GM12878 (cell line): ENCODE measurements at regions of chr2 and their contacts with region 1.

Region 1: DNA sequence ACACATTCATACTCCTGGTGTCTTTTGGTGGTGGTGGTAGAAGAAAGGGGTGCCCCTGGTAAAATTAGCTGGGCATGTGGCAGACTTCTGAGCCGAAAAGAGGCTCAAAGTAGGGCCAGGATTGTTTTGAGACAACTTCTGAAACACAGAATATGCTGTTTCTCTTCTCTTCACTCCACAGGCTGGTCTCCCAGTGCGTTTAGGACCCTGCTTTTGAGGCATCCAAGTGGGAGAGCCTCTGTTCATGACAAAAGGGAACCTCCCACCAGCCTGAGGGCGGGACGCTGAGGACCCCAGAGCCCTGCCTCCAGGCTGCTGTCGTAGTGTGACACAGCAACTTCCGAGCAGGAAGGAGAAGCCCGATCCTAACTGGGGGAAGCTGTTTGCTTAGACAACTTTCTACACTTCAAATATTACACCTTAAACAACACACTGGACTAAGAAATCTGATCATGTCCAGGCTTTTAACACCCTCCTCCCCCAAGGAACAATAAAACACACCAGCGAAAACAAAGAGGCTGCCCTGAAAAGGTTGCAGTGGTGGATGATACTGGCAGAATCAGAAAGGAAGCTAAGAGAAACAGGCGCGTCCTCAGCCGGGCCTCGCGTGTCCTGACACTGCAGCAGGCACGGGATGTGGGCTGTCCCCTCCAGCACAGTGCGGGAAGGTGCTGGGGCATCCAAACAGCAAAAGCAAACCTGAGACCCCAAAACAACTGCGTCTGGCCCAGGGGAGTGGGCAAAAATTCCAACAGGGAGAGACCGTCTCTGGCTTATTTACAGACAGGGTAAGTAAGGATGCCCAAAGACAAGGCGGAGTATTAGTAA is 9.3 kb downstream of the SERTAD2 start:
- DNase-seq: no peak
- ATAC-seq: peak; percentile 76
- H3K4me3 ChIP-seq: peak overlapping the region; percentile 87
- H3K27ac ChIP-seq: peak overlapping the region; percentile 95
- H3K4me1 ChIP-seq: peaks cover 46% of the 10 kb centered on the region
- H3K27me3 ChIP-seq: no peaks in the 10 kb centered on the region
- CTCF ChIP-seq: no peak
- EP300 ChIP-seq: no peak; a peak in 1 of 4 replicates
- POLR2A ChIP-seq: peak; percentile 74
- RAD21 ChIP-seq: no peak

Region 2: DNA sequence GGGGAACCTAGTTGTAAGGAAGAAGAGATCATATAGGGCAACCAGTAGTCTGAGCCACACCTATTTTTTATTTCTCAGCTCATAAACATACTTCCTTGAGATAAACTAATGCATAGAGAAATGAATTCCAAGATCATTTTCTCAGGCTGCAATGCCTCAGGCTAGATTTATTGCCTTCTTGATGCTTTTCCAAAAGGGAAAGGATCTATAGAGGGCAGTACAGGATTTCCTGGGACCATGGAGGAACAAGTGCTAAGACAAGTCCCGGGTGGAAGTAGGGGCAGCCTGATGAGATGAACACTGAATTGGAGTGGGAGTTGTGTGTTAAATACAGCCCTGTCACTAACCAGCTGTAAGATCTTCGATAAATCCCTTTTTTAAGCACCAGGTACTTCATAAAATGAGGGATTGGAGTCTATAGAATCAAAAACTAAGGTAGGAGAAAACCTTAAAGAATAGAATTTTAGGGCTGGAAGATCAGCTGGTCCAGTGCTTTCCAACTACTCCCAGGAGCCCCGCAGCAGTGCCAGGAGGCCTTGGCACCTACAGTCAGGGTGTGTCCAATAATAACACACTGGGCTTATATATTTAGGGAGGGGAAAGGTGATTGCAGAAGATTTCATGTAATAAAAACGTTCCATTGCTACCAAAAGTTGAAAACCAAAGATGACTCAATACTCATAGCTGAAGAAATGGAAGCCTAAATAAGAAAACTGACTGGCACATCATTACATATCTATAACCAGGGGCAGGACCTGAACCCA is 48.8 kb before region 1 on chr2:
- CTCF ChIA-PET with region 1: interaction called, 3 read pairs
- POLR2A ChIA-PET with region 1: interaction called, 3 read pairs
- RAD21 ChIA-PET with region 1: interaction called, 9 read pairs
- SMC1A ChIA-PET with region 1: interaction called, 13 read pairs
- in situ Hi-C with region 1: no loop called
- intact Hi-C with region 1: no loop called
- DNase-seq: no peak
- ATAC-seq: no peak
- H3K4me3 ChIP-seq: no peak overlapping the region
- H3K27ac ChIP-seq: no peak overlapping the region
- H3K4me1 ChIP-seq: peaks cover 6% of the 10 kb centered on the region; the same call in 1 of the 2 replicates
- H3K27me3 ChIP-seq: no peaks in the 10 kb centered on the region
- CTCF ChIP-seq: peak in 1 of 3 experiments; percentile 34; a peak in 2 of 6 replicates
- EP300 ChIP-seq: no peak
- POLR2A ChIP-seq: no peak
- RAD21 ChIP-seq: no peak; the same call in 1 of the 2 replicates

Region 3: GRCh38 chr2:64698668-64699444 is 54.5 kb after region 1 on chr2:
- CTCF ChIA-PET with region 1: interaction called, 13 read pairs
- POLR2A ChIA-PET with region 1: interaction called, 81 read pairs
- RAD21 ChIA-PET with region 1: interaction called, 55 read pairs
- SMC1A ChIA-PET with region 1: interaction called, 262 read pairs
- in situ Hi-C with region 1: no loop called
- intact Hi-C with region 1: loop called (anchors 2 kb)
- DNase-seq: peak; percentile 83
- ATAC-seq: peak; percentile 90
- H3K4me3 ChIP-seq: no peak overlapping the region; the same call in 1 of the 2 replicates
- H3K27ac ChIP-seq: peak overlapping the region; percentile 98
- H3K4me1 ChIP-seq: peaks cover 53% of the 10 kb centered on the region
- H3K27me3 ChIP-seq: no peaks in the 10 kb centered on the region
- CTCF ChIP-seq: no peak
- EP300 ChIP-seq: peak; percentile 41 to 84; a peak in 2 of 4 replicates
- POLR2A ChIP-seq: no peak
- RAD21 ChIP-seq: no peak

Region 4: GRCh38 chr2:64737547-64737946 is 93.2 kb after region 1 on chr2:
- CTCF ChIA-PET with region 1: interaction called, 153 read pairs
- POLR2A ChIA-PET with region 1: interaction called, 32 read pairs
- RAD21 ChIA-PET with region 1: interaction called, 514 read pairs
- SMC1A ChIA-PET with region 1: interaction called, 945 read pairs
- in situ Hi-C with region 1: no loop called
- intact Hi-C with region 1: no loop called
- DNase-seq: peak; percentile 61
- ATAC-seq: peak; percentile 77
- H3K4me3 ChIP-seq: peak overlapping the region; percentile 2; the same call in 1 of the 2 replicates
- H3K27ac ChIP-seq: peak overlapping the region; percentile 62
- H3K4me1 ChIP-seq: peaks cover 26% of the 10 kb centered on the region
- H3K27me3 ChIP-seq: no peaks in the 10 kb centered on the region
- CTCF ChIP-seq: no peak
- EP300 ChIP-seq: peak in 1 of 2 experiments; percentile 16; a peak in 1 of 4 replicates
- POLR2A ChIP-seq: no peak
- RAD21 ChIP-seq: no peak

Region 5: GRCh38 chr2:64831134-64831976 is 187.0 kb after region 1 on chr2:
- CTCF ChIA-PET with region 1: interaction called, 70 read pairs
- POLR2A ChIA-PET with region 1: interaction called, 7 read pairs
- RAD21 ChIA-PET with region 1: interaction called, 65 read pairs
- SMC1A ChIA-PET with region 1: interaction called, 52 read pairs
- in situ Hi-C with region 1: loop called (anchors 10 kb)
- intact Hi-C with region 1: loop called (anchors 1 kb)
- DNase-seq: peak; percentile 71
- ATAC-seq: peak; percentile 96
- H3K4me3 ChIP-seq: peak overlapping the region; percentile 19; the same call in 1 of the 2 replicates
- H3K27ac ChIP-seq: peak overlapping the region; percentile 80
- H3K4me1 ChIP-seq: peaks cover 12% of the 10 kb centered on the region
- H3K27me3 ChIP-seq: no peaks in the 10 kb centered on the region
- CTCF ChIP-seq: peak; percentile 80 to 99 (median 98)
- EP300 ChIP-seq: 0 out of 4 replicates have a peak, but pooled peaks of 1 of the 2 experiments have one; percentile 10
- POLR2A ChIP-seq: no peak; the same call in none of the 2 replicates
- RAD21 ChIP-seq: peak; percentile 85

Region 6: DNA sequence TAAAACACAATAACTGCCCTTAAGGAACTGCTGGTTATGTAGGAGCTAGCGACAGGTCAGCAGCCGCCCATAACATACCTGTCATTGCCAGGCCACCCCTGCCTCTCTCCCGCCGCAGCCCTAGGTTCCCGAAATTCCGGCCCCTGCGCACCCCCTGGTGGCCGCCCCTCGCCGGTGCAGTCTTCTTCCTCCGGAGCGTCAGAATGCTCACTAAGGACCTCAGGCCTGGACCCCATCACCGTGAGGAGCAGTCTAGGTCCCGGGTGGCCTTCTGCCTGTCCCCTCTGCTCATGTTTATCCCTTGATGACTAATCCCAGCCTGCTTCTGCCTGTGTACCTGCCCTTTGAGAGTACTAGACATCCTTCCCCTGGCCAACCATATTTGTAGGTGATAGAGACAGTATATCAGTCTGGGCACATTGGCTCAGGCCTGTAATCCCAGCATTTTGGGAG is 229.1 kb after region 1 on chr2:
- CTCF ChIA-PET with region 1: interaction called, 13 read pairs
- POLR2A ChIA-PET with region 1: no interaction called
- RAD21 ChIA-PET with region 1: interaction called, 4 read pairs
- SMC1A ChIA-PET with region 1: interaction called, 3 read pairs
- in situ Hi-C with region 1: no loop called
- intact Hi-C with region 1: no loop called
- DNase-seq: no peak
- ATAC-seq: peak; percentile 98
- H3K4me3 ChIP-seq: peak overlapping the region; percentile 23; the same call in 1 of the 2 replicates
- H3K27ac ChIP-seq: no peak overlapping the region
- H3K4me1 ChIP-seq: peaks cover 9% of the 10 kb centered on the region
- H3K27me3 ChIP-seq: no peaks in the 10 kb centered on the region
- CTCF ChIP-seq: peak; percentile 94 to 99 (median 98)
- EP300 ChIP-seq: no peak
- POLR2A ChIP-seq: no peak
- RAD21 ChIP-seq: peak; percentile 89

Region 7: DNA sequence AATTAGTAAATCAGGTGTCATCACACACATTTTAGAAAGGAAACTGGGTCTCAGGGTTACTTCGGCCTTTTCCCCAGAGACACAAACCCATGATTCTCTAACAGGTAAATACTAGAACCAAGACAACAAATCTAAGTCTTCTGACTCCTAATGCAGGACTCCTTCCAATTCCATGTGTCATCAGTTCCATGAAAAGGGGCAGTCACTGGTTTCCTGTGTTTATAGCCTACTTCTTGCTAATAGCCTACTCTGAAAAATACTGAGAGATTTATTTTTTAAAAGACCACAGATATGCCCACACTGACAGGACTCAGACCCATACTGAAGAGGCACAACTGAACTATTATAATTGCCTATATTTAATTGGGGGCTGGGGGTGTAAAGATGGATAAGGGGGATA is 452.6 kb after region 1 on chr2:
- CTCF ChIA-PET with region 1: no interaction called
- POLR2A ChIA-PET with region 1: no interaction called
- RAD21 ChIA-PET with region 1: no interaction called
- SMC1A ChIA-PET with region 1: no interaction called
- in situ Hi-C with region 1: no loop called
- intact Hi-C with region 1: no loop called
- DNase-seq: no peak
- ATAC-seq: no peak
- H3K4me3 ChIP-seq: no peak overlapping the region
- H3K27ac ChIP-seq: no peak overlapping the region
- H3K4me1 ChIP-seq: no peaks in the 10 kb centered on the region
- H3K27me3 ChIP-seq: no peaks in the 10 kb centered on the region
- CTCF ChIP-seq: no peak
- EP300 ChIP-seq: no peak
- POLR2A ChIP-seq: no peak
- RAD21 ChIP-seq: no peak